Activated B cell treated with CpG ODN at 0.5 μM for 24 hours (primary cell): ENCODE measurements at regions of chr15 and their contacts with region 1.

Region 1: GRCh38 chr15:57213862-57214261 is 162.4 kb upstream of the CGNL1 start:
- DNase-seq: no peak
- ATAC-seq: peak; percentile 65
- H3K4me3 Mint-ChIP-seq: no peak overlapping the region
- H3K27ac Mint-ChIP-seq: no peak overlapping the region
- H3K4me1 Mint-ChIP-seq: peaks cover 32% of the 10 kb centered on the region
- H3K27me3 Mint-ChIP-seq: no peaks in the 10 kb centered on the region
- CTCF ChIP-seq: no peak

Region 2: GRCh38 chr15:56491110-56491722 is 722.6 kb before region 1 on chr15:
- CTCF ChIA-PET with region 1: interaction called, 10 read pairs
- POLR2A ChIA-PET with region 1: no interaction called
- intact Hi-C with region 1: loop called (anchors 1 kb)
- DNase-seq: no peak
- ATAC-seq: peak; percentile 90
- H3K4me3 Mint-ChIP-seq: no peak overlapping the region
- H3K27ac Mint-ChIP-seq: no peak overlapping the region
- H3K4me1 Mint-ChIP-seq: no peaks in the 10 kb centered on the region
- H3K27me3 Mint-ChIP-seq: no peaks in the 10 kb centered on the region
- CTCF ChIP-seq: no peak

Region 3: GRCh38 chr15:56821721-56822425 is 392.0 kb before region 1 on chr15:
- CTCF ChIA-PET with region 1: interaction called, 5 read pairs
- POLR2A ChIA-PET with region 1: no interaction called
- intact Hi-C with region 1: loop called (anchors 5 kb)
- DNase-seq: no peak
- ATAC-seq: peak; percentile 68
- H3K4me3 Mint-ChIP-seq: no peak overlapping the region
- H3K27ac Mint-ChIP-seq: no peak overlapping the region
- H3K4me1 Mint-ChIP-seq: peaks cover 4% of the 10 kb centered on the region
- H3K27me3 Mint-ChIP-seq: no peaks in the 10 kb centered on the region
- CTCF ChIP-seq: peak; percentile 16

Region 4: GRCh38 chr15:57198654-57199291 is 15.1 kb before region 1 on chr15:
- CTCF ChIA-PET with region 1: interaction called, 3 read pairs
- POLR2A ChIA-PET with region 1: no interaction called
- intact Hi-C with region 1: loop called (anchors 2 kb)
- DNase-seq: no peak
- ATAC-seq: no peak
- H3K4me3 Mint-ChIP-seq: no peak overlapping the region
- H3K27ac Mint-ChIP-seq: no peak overlapping the region
- H3K4me1 Mint-ChIP-seq: peaks cover 2% of the 10 kb centered on the region
- H3K27me3 Mint-ChIP-seq: no peaks in the 10 kb centered on the region
- CTCF ChIP-seq: no peak

Region 5: DNA sequence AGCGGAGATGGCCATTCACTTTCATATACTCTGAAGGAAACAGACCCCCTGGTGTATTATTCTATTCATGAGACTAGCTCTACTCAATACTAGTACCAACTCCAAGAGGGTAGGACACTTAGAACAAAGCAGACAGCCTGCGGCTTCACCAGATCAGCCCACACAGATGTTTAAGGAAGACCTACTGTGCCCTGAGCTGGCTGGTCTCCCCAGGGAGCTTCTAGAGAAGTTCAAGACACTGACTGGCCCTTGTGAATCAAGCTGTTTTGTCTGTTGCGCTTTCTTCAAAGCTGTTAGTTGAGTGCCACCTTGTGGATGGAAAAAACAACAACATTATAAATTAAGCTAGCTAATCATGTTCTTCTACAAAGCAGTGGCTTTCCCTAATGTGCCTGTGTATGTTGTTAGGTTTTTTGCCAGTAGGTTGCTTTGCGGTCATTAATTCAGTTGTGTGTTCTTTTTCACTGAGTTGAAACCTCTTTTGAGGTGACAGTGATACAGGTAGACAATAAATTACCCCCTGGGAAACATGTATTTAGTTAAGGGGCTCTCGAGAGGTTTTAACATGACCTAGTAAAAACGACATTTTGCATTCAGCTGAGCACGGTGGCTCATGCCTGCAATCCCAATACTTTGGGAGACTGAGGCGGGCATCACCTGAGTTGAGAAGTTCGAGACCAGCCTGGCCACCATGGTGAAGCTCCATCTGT is 313.7 kb after region 1 on chr15:
- CTCF ChIA-PET with region 1: interaction called, 7 read pairs
- POLR2A ChIA-PET with region 1: no interaction called
- intact Hi-C with region 1: loop called (anchors 1 kb)
- DNase-seq: peak; percentile 25
- ATAC-seq: peak; percentile 99
- H3K4me3 Mint-ChIP-seq: no peak overlapping the region
- H3K27ac Mint-ChIP-seq: no peak overlapping the region
- H3K4me1 Mint-ChIP-seq: peaks cover 11% of the 10 kb centered on the region
- H3K27me3 Mint-ChIP-seq: peaks cover 3% of the 10 kb centered on the region
- CTCF ChIP-seq: no peak